ENCODE measurements at regions of chr1 and their contacts with region 1.

Region 1: GRCh38 chr1:206556750-206557635 is 49.7 kb downstream of the RASSF5 start:
- DNase-seq: no peak
- H3K4me3 ChIP-seq: peak overlapping the region; percentile 53 to 55
- H3K27ac ChIP-seq: peak overlapping the region; percentile 57
- H3K4me1 ChIP-seq: peaks cover 46% of the 10 kb centered on the region
- H3K27me3 ChIP-seq: no peaks in the 10 kb centered on the region
- CTCF ChIP-seq: no peak
- POLR2A ChIP-seq: no peak

Region 2: DNA sequence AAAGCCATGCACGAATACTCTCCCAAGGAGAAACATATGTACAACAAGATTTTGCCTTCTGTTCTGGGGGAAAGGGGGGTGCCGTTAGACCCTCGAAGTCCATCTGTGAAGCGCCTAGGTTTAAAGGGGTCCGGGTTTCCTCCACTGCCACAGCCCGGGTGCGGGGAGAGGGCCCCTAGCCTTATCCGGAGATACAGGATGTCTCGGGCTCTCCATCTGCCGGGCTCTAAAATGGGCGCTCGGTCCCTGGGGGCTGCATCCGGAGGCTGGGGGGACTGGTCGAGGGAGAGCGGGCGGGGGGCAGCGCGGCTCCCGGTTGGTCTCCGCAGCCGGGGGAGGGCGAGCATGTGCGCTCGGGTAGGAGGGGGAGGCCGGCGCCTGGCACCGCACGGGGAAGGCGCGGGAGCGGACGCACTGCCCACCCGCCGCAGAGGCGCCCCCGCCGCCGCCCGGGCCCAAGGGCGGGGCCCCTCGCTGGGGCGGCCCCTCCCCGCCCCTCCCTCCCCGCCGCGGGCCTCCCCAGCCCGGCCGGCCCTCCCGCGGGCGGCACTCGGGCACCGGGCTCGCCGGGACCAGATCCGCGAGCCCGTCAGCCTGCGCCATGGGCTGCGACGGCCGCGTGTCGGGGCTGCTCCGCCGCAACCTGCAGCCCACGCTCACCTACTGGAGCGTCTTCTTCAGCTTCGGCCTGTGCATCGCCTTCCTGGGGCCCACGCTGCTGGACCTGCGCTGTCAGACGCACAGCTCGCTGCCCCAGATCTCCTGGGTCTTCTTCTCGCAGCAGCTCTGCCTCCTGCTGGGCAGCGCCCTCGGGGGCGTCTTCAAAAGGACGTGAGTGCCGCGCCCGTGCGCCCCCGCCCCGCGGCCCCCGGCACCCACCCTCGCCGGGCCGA is 988.3 kb before region 1 on chr1:
- intact Hi-C with region 1: no loop called
- DNase-seq: peak in 1 of 2 donors; percentile 55
- H3K4me3 ChIP-seq: peak overlapping the region; percentile 34
- H3K27ac ChIP-seq: no peak overlapping the region
- H3K4me1 ChIP-seq: peaks cover 9% of the 10 kb centered on the region
- H3K27me3 ChIP-seq: no peaks in the 10 kb centered on the region
- CTCF ChIP-seq: no peak
- POLR2A ChIP-seq: no peak

Region 3: GRCh38 chr1:206575165-206575893 is 18.3 kb after region 1 on chr1:
- intact Hi-C with region 1: loop called (anchors 1 kb)
- DNase-seq: no peak
- H3K4me3 ChIP-seq: no peak overlapping the region
- H3K27ac ChIP-seq: peak overlapping the region; percentile 50
- H3K4me1 ChIP-seq: peaks cover 28% of the 10 kb centered on the region
- H3K27me3 ChIP-seq: no peaks in the 10 kb centered on the region
- CTCF ChIP-seq: no peak
- POLR2A ChIP-seq: no peak